Prostate gland (tissue), 2 donors: ENCODE measurements at regions of chr17 and their contacts with region 1.

Region 1: DNA sequence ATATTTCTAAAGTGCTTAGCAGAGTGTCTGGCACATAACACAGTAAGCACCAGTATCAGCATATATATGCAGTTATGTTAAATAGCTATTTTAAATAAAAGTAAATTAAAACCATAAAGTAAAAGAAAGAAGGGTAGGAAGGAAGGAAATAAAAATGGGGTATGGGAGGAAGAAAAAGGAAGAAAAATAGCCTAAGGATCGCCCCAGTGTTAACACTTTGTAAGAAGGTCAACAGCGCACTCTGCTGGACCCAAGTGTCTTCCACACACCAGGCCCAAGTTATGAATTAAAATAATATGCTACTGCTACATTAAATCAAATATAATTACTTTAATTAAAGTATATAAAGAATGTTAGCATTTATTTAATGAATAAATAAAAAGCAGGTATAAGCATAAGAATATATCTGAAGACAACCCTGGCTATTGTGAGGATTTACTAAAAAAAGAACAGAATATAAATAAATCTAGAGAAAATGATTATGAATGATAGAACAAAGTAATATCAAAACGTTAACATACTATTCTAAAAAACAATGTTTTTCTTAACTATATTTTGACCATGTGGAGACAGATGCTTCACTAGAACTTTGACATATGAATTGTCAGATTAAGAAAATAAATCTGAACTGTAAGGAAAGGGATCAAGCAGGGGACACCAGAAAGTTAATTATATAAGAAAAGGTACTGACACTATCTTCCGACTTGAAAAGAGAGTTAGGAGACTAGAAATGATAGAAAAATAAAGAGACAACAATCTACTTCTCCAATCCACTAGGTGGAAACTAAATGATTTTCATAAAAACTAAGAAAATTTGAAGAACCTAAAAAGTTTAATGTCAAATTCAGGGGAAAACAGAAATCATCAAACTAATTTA is 25.9 kb downstream of the BRIP1 start:
- DNase-seq: peak; percentile 47
- H3K4me3 ChIP-seq: no peak overlapping the region
- H3K27ac ChIP-seq: no peak overlapping the region
- H3K4me1 ChIP-seq: no peaks in the 10 kb centered on the region
- H3K27me3 ChIP-seq: no peaks in the 10 kb centered on the region
- CTCF ChIP-seq: peak; percentile 28 to 74 (median 57)
- POLR2A ChIP-seq: no peak

Region 2: GRCh38 chr17:61551255-61551742 is 286.1 kb before region 1 on chr17:
- intact Hi-C with region 1: loop called (anchors 10 kb)
- DNase-seq: no peak
- H3K4me3 ChIP-seq: no peak overlapping the region
- H3K27ac ChIP-seq: no peak overlapping the region
- H3K4me1 ChIP-seq: no peaks in the 10 kb centered on the region
- H3K27me3 ChIP-seq: no peaks in the 10 kb centered on the region
- CTCF ChIP-seq: peak in 3 of 4 experiments; percentile 40 to 79 (median 73)
- POLR2A ChIP-seq: no peak